ENCODE measurements at regions of chr1 and their contacts with region 1.

Region 1: DNA sequence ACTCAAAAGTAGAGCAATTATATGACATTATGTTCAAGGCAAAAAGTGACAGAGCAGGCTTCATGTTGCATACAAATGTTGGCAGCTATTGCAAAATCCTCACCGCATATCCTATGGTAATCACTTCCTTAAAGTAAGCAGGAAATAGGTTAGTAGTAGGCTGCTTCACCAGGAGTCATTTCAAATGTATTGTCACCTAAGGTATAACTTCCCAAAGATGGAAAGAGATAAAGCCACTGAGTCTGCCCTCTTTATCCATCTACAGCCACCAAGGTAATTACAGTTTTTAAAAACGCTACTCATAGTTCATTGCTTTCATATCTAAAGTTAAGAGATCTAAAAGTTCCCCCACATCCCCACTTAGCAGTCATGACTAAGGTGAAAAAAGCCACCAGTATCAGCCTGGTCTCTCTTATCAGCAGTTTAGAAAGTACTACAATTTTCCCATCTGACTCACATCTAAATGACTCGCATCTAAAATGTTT is 31.6 kb upstream of the UBE2U start:
- DNase-seq: no peak
- ATAC-seq: peak; percentile 86
- H3K4me3 Mint-ChIP-seq: no peak overlapping the region
- H3K27ac Mint-ChIP-seq: peak overlapping the region; percentile 38
- H3K4me1 Mint-ChIP-seq: peaks cover 23% of the 10 kb centered on the region
- H3K27me3 Mint-ChIP-seq: peaks cover 16% of the 10 kb centered on the region

Region 2: GRCh38 chr1:64223329-64224151 is 51.7 kb after region 1 on chr1:
- CTCF ChIA-PET with region 1: no interaction called
- POLR2A ChIA-PET with region 1: no interaction called
- intact Hi-C with region 1: loop called (anchors 2 to 5 kb)
- DNase-seq: no peak
- ATAC-seq: peak; percentile 82
- H3K4me3 Mint-ChIP-seq: no peak overlapping the region
- H3K27ac Mint-ChIP-seq: peak overlapping the region; percentile 58
- H3K4me1 Mint-ChIP-seq: peaks cover 11% of the 10 kb centered on the region
- H3K27me3 Mint-ChIP-seq: peaks cover 33% of the 10 kb centered on the region

Region 3: GRCh38 chr1:64320470-64320869 is 148.6 kb after region 1 on chr1:
- CTCF ChIA-PET with region 1: no interaction called
- POLR2A ChIA-PET with region 1: no interaction called
- intact Hi-C with region 1: no loop called
- DNase-seq: no peak
- ATAC-seq: peak; percentile 19
- H3K4me3 Mint-ChIP-seq: no peak overlapping the region
- H3K27ac Mint-ChIP-seq: no peak overlapping the region
- H3K4me1 Mint-ChIP-seq: no peaks in the 10 kb centered on the region
- H3K27me3 Mint-ChIP-seq: peaks cover 11% of the 10 kb centered on the region

Measured in activated CD4-positive, alpha-beta T cell treated with anti-CD3 and anti-CD28 coated beads for 36 hours (primary cell).